BJ (cell line): ENCODE measurements at regions of chr19 and their contacts with region 1.

Region 1: GRCh38 chr19:31548941-31549340 is 199.7 kb upstream of the TSHZ3 start:
- DNase-seq: no peak
- H3K4me3 ChIP-seq: no peak overlapping the region
- H3K27me3 ChIP-seq: no peaks in the 10 kb centered on the region
- CTCF ChIP-seq: peak; percentile 77

Region 2: DNA sequence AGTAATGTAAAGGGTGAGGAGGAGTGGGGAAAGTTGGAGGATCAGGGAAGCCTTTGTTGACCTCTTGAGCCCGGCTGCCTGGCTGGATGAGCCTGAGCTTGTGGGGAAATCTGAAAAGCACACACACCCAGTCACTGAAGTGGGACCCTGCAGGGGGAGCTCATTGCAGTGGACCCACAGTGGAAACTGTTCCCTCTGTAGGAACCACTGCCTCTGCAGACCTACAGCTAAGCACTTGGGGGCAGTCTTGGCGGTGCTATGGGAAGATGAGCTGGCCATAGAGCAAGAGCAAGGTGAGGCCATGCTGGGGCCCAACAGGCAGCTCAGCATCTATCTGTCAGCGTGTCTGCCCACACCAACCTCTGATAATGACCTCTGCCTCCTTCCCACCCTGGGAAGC is 494.5 kb before region 1 on chr19:
- CTCF ChIA-PET with region 1: interaction called, 26 read pairs
- POLR2A ChIA-PET with region 1: no interaction called
- DNase-seq: no peak
- H3K4me3 ChIP-seq: no peak overlapping the region
- H3K27me3 ChIP-seq: 0 out of 2 replicates have a peak, but pooled peaks cover 2% of the 10 kb centered on the region
- CTCF ChIP-seq: peak; percentile 83

Region 3: GRCh38 chr19:31110331-31110730 is 438.6 kb before region 1 on chr19:
- CTCF ChIA-PET with region 1: interaction called, 27 read pairs
- POLR2A ChIA-PET with region 1: no interaction called
- DNase-seq: no peak
- H3K4me3 ChIP-seq: no peak overlapping the region
- H3K27me3 ChIP-seq: no peaks in the 10 kb centered on the region; the same call in 1 of the 2 replicates
- CTCF ChIP-seq: peak; percentile 58

Region 4: GRCh38 chr19:31832176-31832548 is 283.2 kb after region 1 on chr19:
- CTCF ChIA-PET with region 1: no interaction called
- POLR2A ChIA-PET with region 1: no interaction called
- DNase-seq: no peak
- H3K4me3 ChIP-seq: no peak overlapping the region
- H3K27me3 ChIP-seq: no peaks in the 10 kb centered on the region
- CTCF ChIP-seq: no peak